Kidney (tissue), 22 donors: ENCODE measurements at regions of chr7 and their contacts with region 1.

Region 1: DNA sequence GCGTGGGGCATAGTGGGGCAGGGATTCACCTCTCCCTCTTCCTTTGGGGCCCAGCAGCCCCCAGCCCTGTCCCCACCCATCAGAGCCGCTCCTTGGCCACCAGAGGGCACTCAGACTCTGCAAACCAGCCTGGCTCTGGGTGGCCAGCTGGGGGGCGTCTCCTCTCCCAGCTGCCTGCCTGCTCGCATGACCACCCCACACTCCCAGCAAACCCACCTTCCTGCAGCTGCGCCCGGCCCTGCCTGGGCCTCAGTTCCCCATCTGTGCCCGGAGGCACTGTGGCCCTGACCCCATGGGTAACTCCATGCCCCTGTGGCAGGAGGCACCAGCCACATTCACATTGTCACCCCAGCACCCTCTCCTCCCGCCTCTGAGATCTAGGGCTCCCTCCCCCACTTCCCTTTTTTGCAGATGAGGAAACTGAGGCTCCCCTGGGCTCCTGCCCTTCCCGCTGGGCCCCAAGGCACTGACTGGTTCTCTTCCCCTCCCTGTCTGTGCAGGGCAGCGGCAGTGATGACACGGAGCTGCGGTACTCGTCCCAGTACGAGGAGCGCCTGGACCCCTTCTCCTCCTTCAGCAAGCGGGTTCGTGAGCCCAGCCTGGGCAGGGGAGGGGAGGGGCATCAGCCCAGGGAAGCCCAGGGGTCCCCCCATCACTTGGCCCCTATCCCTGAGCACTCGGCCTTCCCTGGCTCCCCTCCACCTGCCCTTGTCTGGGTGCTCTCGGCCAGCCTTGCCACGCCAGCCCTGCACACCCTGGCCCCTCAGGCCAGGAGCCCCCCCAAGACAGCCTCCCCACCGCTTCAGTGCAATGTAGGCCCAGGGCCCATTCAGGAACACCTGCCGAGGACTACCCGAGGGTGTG is 6.9 kb upstream of the SH2B2 start:
- DNase-seq: peak in 4 of 5 donors; percentile 85 to 93 (median 88)
- H3K4me3 ChIP-seq: no peak overlapping the region
- H3K27ac ChIP-seq: no peak overlapping the region
- H3K4me1 ChIP-seq: no peaks in the 10 kb centered on the region
- H3K27me3 ChIP-seq: no peaks in the 10 kb centered on the region
- CTCF ChIP-seq: peak; percentile 90

Region 2: GRCh38 chr7:102211590-102212550 is 67.9 kb before region 1 on chr7:
- intact Hi-C with region 1: no loop called
- DNase-seq: no peak
- H3K4me3 ChIP-seq: no peak overlapping the region
- H3K27ac ChIP-seq: no peak overlapping the region
- H3K4me1 ChIP-seq: peaks cover 0 to 3% (median 0%) of the 10 kb centered on the region in 3 donors
- H3K27me3 ChIP-seq: no peaks in the 10 kb centered on the region
- CTCF ChIP-seq: no peak

Region 3: DNA sequence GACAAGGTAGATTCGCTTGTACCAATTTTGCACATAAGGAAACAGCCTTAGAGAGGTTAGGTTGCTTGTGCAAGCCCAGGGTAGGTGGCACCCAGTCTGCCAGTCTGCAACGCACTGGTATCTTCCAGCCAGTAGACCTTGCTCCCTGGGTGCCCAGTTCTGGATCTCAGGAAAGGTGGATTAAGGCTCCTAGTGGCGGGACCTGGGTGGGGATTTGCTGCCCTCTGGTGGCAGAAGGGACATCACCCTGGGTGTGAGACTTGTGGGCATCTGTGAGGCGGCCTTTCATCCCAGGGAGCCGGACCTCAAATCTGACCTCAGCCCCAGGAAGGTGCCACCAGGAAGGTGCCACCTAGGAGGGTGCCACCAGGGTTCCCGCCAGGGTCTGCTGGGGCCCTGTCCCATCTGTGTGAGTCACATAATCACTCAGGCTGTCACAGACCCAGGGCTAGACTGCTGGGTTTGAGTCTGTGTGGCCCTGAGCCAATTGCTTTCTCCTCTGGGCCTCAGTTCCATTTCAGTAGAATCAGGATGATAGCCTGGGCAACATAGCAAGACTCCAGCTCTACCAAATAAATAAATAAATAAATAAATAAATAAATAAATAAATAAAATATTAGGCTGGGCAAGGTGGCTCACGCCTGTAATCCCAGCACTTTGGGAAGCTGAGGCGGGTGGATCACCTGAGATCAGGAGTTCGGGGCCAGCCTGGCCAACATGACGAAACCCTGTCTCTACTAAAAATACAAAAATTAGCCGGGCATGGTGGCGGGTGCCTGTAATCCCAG is 111.1 kb after region 1 on chr7:
- intact Hi-C with region 1: loop called (anchors 5 kb)
- DNase-seq: peak; percentile 86 to 90 (median 89)
- H3K4me3 ChIP-seq: no peak overlapping the region
- H3K27ac ChIP-seq: no peak overlapping the region
- H3K4me1 ChIP-seq: peaks cover 0 to 5% (median 0%) of the 10 kb centered on the region in 3 donors
- H3K27me3 ChIP-seq: no peaks in the 10 kb centered on the region
- CTCF ChIP-seq: peak; percentile 93

Region 4: GRCh38 chr7:102425639-102426267 is 146.0 kb after region 1 on chr7:
- intact Hi-C with region 1: no loop called
- DNase-seq: peak; percentile 58 to 91 (median 72)
- H3K4me3 ChIP-seq: no peak overlapping the region
- H3K27ac ChIP-seq: no peak overlapping the region
- H3K4me1 ChIP-seq: no peaks in the 10 kb centered on the region
- H3K27me3 ChIP-seq: no peaks in the 10 kb centered on the region
- CTCF ChIP-seq: no peak